Activated CD4-positive, alpha-beta T cell treated with anti-CD3 and anti-CD28 coated beads, Interleukin-2, amount 10 ng/mL, durations not matched to agents 24 days and 14 days (primary cell): ENCODE measurements at regions of chr9 and their contacts with region 1.

Region 1: GRCh38 chr9:109817846-109818472 is 38.0 kb downstream of the PALM2AKAP2 start:
- DNase-seq: peak; percentile 87
- H3K4me3 Mint-ChIP-seq: no peak overlapping the region
- H3K27ac Mint-ChIP-seq: no peak overlapping the region
- H3K4me1 Mint-ChIP-seq: no peaks in the 10 kb centered on the region
- H3K27me3 Mint-ChIP-seq: peaks cover 3% of the 10 kb centered on the region

Region 2: GRCh38 chr9:109574068-109574882 is 243.7 kb before region 1 on chr9:
- intact Hi-C with region 1: loop called (anchors 1 kb)
- DNase-seq: peak; percentile 79
- H3K4me3 Mint-ChIP-seq: no peak overlapping the region
- H3K27ac Mint-ChIP-seq: no peak overlapping the region
- H3K4me1 Mint-ChIP-seq: no peaks in the 10 kb centered on the region
- H3K27me3 Mint-ChIP-seq: peaks cover 30% of the 10 kb centered on the region

Region 3: DNA sequence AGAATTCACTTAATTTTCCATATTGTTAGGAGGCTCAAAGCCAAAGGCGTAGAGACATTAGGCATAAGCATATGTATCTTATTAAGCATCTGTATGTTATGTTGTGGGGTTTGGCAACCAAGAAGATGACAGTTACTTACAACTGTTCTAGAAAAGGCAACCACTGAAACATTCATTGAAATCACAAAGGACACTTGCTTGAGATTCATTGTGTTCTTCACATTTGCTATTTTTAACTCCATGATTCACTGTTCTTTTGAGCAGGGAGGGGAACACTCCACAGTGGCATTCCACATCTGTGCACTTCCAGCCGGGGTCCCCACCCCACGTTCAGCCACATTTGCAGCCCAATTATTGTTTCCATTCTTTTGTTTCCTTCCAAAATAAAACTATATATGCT is 69.1 kb after region 1 on chr9:
- intact Hi-C with region 1: loop called (anchors 2 kb)
- DNase-seq: no peak
- H3K4me3 Mint-ChIP-seq: peak overlapping the region; percentile 75
- H3K27ac Mint-ChIP-seq: peak overlapping the region; percentile 94
- H3K4me1 Mint-ChIP-seq: peaks cover 69% of the 10 kb centered on the region
- H3K27me3 Mint-ChIP-seq: no peaks in the 10 kb centered on the region

Region 4: GRCh38 chr9:110382741-110383140 is 564.8 kb after region 1 on chr9:
- intact Hi-C with region 1: no loop called
- DNase-seq: no peak
- H3K4me3 Mint-ChIP-seq: no peak overlapping the region
- H3K27ac Mint-ChIP-seq: no peak overlapping the region
- H3K4me1 Mint-ChIP-seq: no peaks in the 10 kb centered on the region
- H3K27me3 Mint-ChIP-seq: peaks cover 11% of the 10 kb centered on the region